SK-MEL-5 (cell line): ENCODE measurements at regions of chr5 and their contacts with region 1.

Region 1: DNA sequence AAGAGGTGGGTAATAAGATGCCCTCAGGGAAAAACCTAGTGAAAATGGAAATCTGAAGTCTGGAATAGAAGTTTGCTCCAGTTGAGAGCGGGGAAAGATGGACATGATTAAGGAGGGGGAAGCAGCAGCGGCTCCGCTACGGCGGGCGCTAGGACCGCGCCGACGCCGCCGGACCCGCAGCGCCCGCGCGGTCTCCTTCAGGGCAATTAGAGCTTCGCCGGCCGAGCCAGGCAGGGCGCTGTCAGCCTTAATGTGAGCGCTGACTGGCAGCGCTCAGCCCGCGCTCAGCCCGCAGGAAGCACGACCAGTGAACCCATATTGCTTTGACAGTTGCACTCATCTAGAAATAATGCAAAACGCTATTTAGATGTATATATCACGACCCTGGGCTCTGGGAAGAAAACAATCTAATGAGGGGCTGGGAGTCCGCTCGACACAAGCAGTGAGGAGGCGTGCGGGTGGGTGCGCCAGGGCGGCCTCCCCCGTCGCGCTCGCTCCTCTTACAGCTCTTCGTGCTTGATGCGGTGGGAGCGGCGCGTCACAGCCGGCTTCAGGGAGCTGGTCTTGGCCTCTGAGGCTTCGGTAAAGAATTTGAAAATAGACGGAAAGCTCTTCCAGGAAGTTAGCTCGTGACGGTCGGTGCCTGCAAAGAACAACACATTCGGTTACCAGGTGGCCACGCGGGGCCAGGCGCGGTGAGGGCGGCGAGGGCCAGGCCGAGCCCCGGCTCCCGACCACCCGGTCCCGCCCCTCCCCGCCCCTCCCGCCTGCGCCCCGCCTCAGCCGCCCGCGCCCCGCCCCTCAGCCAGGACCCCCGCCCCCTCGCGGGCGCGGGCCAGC is 37.7 kb downstream of the NR2F1 start:
- DNase-seq: peak; percentile 78

Region 2: GRCh38 chr5:93184041-93184440 is 436.7 kb before region 1 on chr5:
- in situ Hi-C with region 1: no loop called
- DNase-seq: no peak

Region 3: GRCh38 chr5:93800988-93801811 is 180.5 kb after region 1 on chr5:
- in situ Hi-C with region 1: loop called (anchors 25 kb)
- DNase-seq: peak; percentile 68

Region 4: GRCh38 chr5:94707359-94707758 is 1086.7 kb after region 1 on chr5:
- in situ Hi-C with region 1: no loop called
- DNase-seq: no peak